Activated CD8-positive, alpha-beta memory T cell treated with anti-CD3 and anti-CD28 coated beads, Interleukin-2, amount 10 ng/mL, durations not matched to agents 7 days and 5 days (primary cell): ENCODE measurements at regions of chr14 and their contacts with region 1.

Region 1: GRCh38 chr14:75906676-75907280 is 75.0 kb downstream of the TGFB3 start:
- DNase-seq: peak; percentile 75
- ATAC-seq: no peak
- H3K4me3 Mint-ChIP-seq: no peak overlapping the region
- H3K27ac Mint-ChIP-seq: no peak overlapping the region
- H3K4me1 Mint-ChIP-seq: no peaks in the 10 kb centered on the region
- H3K27me3 Mint-ChIP-seq: no peaks in the 10 kb centered on the region

Region 2: GRCh38 chr14:75709207-75709812 is 197.5 kb before region 1 on chr14:
- CTCF ChIA-PET with region 1: interaction called, 17 read pairs
- DNase-seq: peak; percentile 73
- ATAC-seq: peak; percentile 78
- H3K4me3 Mint-ChIP-seq: no peak overlapping the region
- H3K27ac Mint-ChIP-seq: no peak overlapping the region
- H3K4me1 Mint-ChIP-seq: no peaks in the 10 kb centered on the region
- H3K27me3 Mint-ChIP-seq: no peaks in the 10 kb centered on the region

Region 3: GRCh38 chr14:75879031-75879430 is 27.7 kb before region 1 on chr14:
- CTCF ChIA-PET with region 1: interaction called, 11 read pairs
- DNase-seq: no peak
- ATAC-seq: peak; percentile 71
- H3K4me3 Mint-ChIP-seq: no peak overlapping the region
- H3K27ac Mint-ChIP-seq: no peak overlapping the region
- H3K4me1 Mint-ChIP-seq: peaks cover 47% of the 10 kb centered on the region
- H3K27me3 Mint-ChIP-seq: no peaks in the 10 kb centered on the region

Region 4: GRCh38 chr14:75917322-75917945 is 10.7 kb after region 1 on chr14:
- CTCF ChIA-PET with region 1: interaction called, 19 read pairs
- DNase-seq: no peak
- ATAC-seq: no peak
- H3K4me3 Mint-ChIP-seq: no peak overlapping the region
- H3K27ac Mint-ChIP-seq: no peak overlapping the region
- H3K4me1 Mint-ChIP-seq: no peaks in the 10 kb centered on the region
- H3K27me3 Mint-ChIP-seq: no peaks in the 10 kb centered on the region

Region 5: GRCh38 chr14:75934998-75935628 is 28.3 kb after region 1 on chr14:
- CTCF ChIA-PET with region 1: interaction called, 11 read pairs
- DNase-seq: no peak
- ATAC-seq: no peak
- H3K4me3 Mint-ChIP-seq: no peak overlapping the region
- H3K27ac Mint-ChIP-seq: no peak overlapping the region
- H3K4me1 Mint-ChIP-seq: no peaks in the 10 kb centered on the region
- H3K27me3 Mint-ChIP-seq: no peaks in the 10 kb centered on the region

Region 6: GRCh38 chr14:75946785-75947184 is 40.0 kb after region 1 on chr14:
- CTCF ChIA-PET with region 1: no interaction called
- DNase-seq: no peak
- ATAC-seq: no peak
- H3K4me3 Mint-ChIP-seq: no peak overlapping the region
- H3K27ac Mint-ChIP-seq: no peak overlapping the region
- H3K4me1 Mint-ChIP-seq: no peaks in the 10 kb centered on the region
- H3K27me3 Mint-ChIP-seq: no peaks in the 10 kb centered on the region

Region 7: GRCh38 chr14:75982266-75983018 is 75.7 kb after region 1 on chr14:
- CTCF ChIA-PET with region 1: interaction called, 118 read pairs
- DNase-seq: peak; percentile 79
- ATAC-seq: peak; percentile 74
- H3K4me3 Mint-ChIP-seq: peak overlapping the region; percentile 79
- H3K27ac Mint-ChIP-seq: peak overlapping the region; percentile 78
- H3K4me1 Mint-ChIP-seq: peaks cover 42% of the 10 kb centered on the region
- H3K27me3 Mint-ChIP-seq: peaks cover 3% of the 10 kb centered on the region